Dendritic cell treated with granulocyte-macrophage colony-stimulating factor and Interleukin-4, amounts not matched to agents 40 ng/mL and 50 ng/mL, for 4 days (primary cell): ENCODE measurements at regions of chr6 and their contacts with region 1.

Region 1: GRCh38 chr6:158686791-158687381 is 37.0 kb downstream of the SYTL3 start:
- H3K4me3 Mint-ChIP-seq: no peak overlapping the region
- H3K27ac Mint-ChIP-seq: peak overlapping the region; percentile 52
- H3K4me1 Mint-ChIP-seq: peaks cover 21% of the 10 kb centered on the region
- H3K27me3 Mint-ChIP-seq: no peaks in the 10 kb centered on the region

Region 2: GRCh38 chr6:158185729-158186456 is 501.0 kb before region 1 on chr6:
- intact Hi-C with region 1: no loop called
- H3K4me3 Mint-ChIP-seq: no peak overlapping the region
- H3K27ac Mint-ChIP-seq: no peak overlapping the region
- H3K4me1 Mint-ChIP-seq: peaks cover 5% of the 10 kb centered on the region
- H3K27me3 Mint-ChIP-seq: no peaks in the 10 kb centered on the region

Region 3: GRCh38 chr6:158220786-158221442 is 466.0 kb before region 1 on chr6:
- intact Hi-C with region 1: loop called (anchors 5 kb)
- H3K4me3 Mint-ChIP-seq: no peak overlapping the region
- H3K27ac Mint-ChIP-seq: no peak overlapping the region
- H3K4me1 Mint-ChIP-seq: peaks cover 15% of the 10 kb centered on the region
- H3K27me3 Mint-ChIP-seq: peaks cover 5% of the 10 kb centered on the region

Region 4: GRCh38 chr6:158644231-158645063 is 42.4 kb before region 1 on chr6 and contains the start of gene DYNLT1:
- intact Hi-C with region 1: loop called (anchors 5 kb)
- H3K4me3 Mint-ChIP-seq: peak within 1 kb of the TSS; percentile 93
- H3K27ac Mint-ChIP-seq: peak within 1 kb of the TSS; percentile 93
- H3K4me1 Mint-ChIP-seq: peaks cover 50% of the 10 kb centered on the region
- H3K27me3 Mint-ChIP-seq: no peaks in the 10 kb centered on the region

Region 5: GRCh38 chr6:158666628-158667359 is 20.1 kb before region 1 on chr6:
- intact Hi-C with region 1: loop called (anchors 2 kb)
- H3K4me3 Mint-ChIP-seq: peak overlapping the region; percentile 27
- H3K27ac Mint-ChIP-seq: peak overlapping the region; percentile 94
- H3K4me1 Mint-ChIP-seq: peaks cover 58% of the 10 kb centered on the region
- H3K27me3 Mint-ChIP-seq: no peaks in the 10 kb centered on the region